ENCODE measurements at regions of chr9 and their contacts with region 1.

Region 1: GRCh38 chr9:83204047-83204446 is 141.1 kb upstream of the RASEF start:
- DNase-seq: peak in 1 of 2 donors; percentile 10
- H3K4me3 ChIP-seq: no peak overlapping the region
- H3K27ac ChIP-seq: no peak overlapping the region
- H3K4me1 ChIP-seq: no peaks in the 10 kb centered on the region
- H3K27me3 ChIP-seq: no peaks in the 10 kb centered on the region
- CTCF ChIP-seq: peak in 4 of 6 experiments; percentile 12 to 41 (median 32)
- POLR2A ChIP-seq: no peak

Region 2: GRCh38 chr9:83538172-83538889 is 334.3 kb after region 1 on chr9 and contains the start of gene FRMD3:
- intact Hi-C with region 1: loop called (anchors 5 kb)
- DNase-seq: peak; percentile 91 to 94
- H3K4me3 ChIP-seq: peak within 1 kb of the TSS; percentile 17 to 62 (median 58)
- H3K27ac ChIP-seq: peak within 1 kb of the TSS; percentile 45 to 79 (median 52)
- H3K4me1 ChIP-seq: peaks cover 0 to 16% of the 10 kb centered on the region in 2 donors
- H3K27me3 ChIP-seq: no peaks in the 10 kb centered on the region
- CTCF ChIP-seq: peak; percentile 75 to 90 (median 86)
- POLR2A ChIP-seq: peak in 1 of 2 donors; percentile 79
- total RNA-seq, gene FRMD3: 15.9 to 28.6 (median 20.7) TPM